PC-9 (cell line): ENCODE measurements at regions of chr1 and their contacts with region 1.

Region 1: DNA sequence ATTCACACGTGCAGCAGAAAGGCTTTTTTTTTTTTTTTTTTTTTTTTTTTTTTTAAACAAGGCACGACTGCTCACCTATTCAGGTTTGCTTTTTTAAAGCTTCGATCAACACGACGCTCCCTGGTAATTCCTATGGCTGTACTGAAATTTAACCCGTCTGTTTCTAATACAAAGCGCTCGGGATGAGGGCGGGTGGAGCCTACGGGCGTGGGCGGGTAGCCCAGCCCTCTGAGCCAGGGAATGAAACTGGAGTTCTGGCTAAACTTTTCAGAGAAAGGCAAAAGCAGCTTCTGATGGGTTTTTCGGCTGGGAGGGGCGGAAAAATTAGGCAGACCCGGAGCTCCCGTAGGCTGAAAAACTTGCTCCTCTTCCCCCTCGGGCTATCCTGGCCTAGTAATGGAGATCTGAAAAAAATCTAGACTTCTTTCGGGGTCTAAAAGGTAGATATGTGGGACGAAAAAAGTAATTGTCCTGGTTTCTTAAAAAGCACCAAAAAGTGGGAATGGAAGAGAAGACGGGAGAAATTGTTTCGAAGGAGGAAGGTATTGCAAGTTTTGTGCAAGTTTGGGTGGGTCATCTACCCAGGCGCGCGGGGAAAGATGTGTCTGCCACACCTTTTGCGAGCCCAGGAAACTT is 7.4 kb downstream of the NR5A2 start:
- DNase-seq: no peak
- H3K4me3 ChIP-seq: no peak overlapping the region
- H3K27ac ChIP-seq: no peak overlapping the region
- H3K4me1 ChIP-seq: peaks cover 9% of the 10 kb centered on the region; the same call in 1 of the 2 replicates
- H3K27me3 ChIP-seq: no peaks in the 10 kb centered on the region
- CTCF ChIP-seq: no peak

Region 2: DNA sequence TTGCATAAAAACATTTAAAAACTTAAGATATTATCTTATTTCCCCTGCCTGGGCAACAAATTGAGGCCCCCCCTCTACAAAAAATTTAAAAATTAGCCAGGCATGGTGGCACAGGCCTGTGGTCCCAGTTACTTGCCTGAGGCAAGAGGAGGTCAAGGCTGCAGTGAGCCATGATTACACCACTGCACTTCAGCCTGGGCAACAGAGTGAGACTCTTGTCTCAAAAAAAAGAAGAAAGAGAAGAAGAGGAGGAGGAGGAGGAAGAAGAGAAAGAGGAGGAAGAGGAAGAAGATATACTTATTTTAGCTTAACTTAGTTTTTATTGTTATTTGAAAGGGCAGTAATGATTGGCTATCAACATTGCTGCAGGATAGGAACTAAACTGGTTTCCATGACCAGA is 1720.3 kb after region 1 on chr1:
- CTCF ChIA-PET with region 1: interaction called, 10 read pairs
- POLR2A ChIA-PET with region 1: no interaction called
- intact Hi-C with region 1: no loop called
- DNase-seq: no peak
- H3K4me3 ChIP-seq: no peak overlapping the region
- H3K27ac ChIP-seq: no peak overlapping the region
- H3K4me1 ChIP-seq: peaks cover 22% of the 10 kb centered on the region
- H3K27me3 ChIP-seq: no peaks in the 10 kb centered on the region
- CTCF ChIP-seq: no peak